HCT116 (cell line): ENCODE measurements at regions of chr6 and their contacts with region 1.

Region 1: DNA sequence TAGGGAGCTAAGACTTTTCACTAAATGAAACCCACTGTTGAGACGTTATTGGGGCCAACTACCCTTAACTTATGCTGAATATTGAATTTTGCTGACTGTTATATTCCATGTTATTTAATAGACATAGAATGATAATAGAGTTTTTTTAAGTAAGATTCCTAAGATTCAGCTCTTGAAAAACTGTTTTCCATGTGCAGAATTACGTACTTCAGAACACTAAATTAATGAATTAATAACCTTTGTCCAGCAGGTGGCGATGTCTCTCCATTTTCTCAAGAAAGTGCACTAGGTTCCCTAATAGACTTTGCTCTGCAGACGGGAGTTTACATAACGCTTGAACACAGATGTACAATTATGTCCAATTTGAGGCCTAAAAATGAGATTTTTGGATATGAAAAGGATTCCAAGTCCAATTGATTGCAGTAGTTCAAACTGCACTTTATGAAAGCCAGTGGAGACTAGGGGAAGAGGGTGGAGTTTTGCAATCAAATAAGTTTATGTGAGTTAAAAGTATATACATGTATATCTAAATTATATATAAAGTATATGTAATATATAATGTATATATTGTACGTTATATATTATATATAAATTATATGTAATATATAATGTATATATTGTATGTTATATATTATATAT is 282.1 kb downstream of the UST start:
- DNase-seq: peak; percentile 88
- ATAC-seq: peak; percentile 29; the same call in 1 of the 2 replicates
- H3K4me3 ChIP-seq: no peak overlapping the region
- H3K27ac ChIP-seq: no peak overlapping the region
- H3K4me1 ChIP-seq: peaks cover 27 to 30% of the 10 kb centered on the region in 2 experiments
- H3K27me3 ChIP-seq: no peaks in the 10 kb centered on the region
- CTCF ChIP-seq: peak; percentile 34 to 77 (median 69); a peak in 5 of 6 replicates
- POLR2A ChIP-seq: no peak
- RAD21 ChIP-seq: peak; percentile 93

Region 2: DNA sequence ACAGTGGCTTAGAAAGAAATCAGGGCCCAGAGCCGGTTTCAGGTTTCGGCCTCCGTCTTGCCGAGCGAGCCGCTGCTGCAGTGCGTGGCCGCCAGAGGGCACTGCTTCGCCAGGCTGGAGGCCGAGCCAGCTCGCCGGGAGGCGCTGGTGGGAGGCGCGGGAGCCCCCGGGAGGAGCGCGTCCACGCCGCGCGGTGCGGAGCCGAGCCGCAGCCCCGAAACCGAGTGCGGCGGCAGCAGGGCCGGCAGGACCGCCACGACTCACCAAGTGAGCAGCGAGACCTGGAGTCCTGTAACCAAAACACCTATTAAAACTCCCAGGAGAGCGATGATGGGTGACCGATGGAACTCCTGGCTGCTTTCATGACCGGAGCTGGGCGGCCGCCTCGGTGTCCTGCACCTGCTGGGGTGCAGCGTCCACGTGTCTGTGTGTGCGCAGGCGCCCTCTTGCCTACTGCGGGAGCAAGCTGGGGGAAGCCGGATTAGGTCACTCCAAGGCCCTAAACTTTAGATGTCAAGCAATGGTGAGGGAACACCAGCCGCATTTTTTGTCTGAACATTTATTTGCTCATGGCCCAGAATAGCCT is 468.9 kb before region 1 on chr6:
- CTCF ChIA-PET with region 1: interaction called, 6 read pairs
- POLR2A ChIA-PET with region 1: no interaction called
- RAD21 ChIA-PET with region 1: no interaction called
- intact Hi-C with region 1: loop called (anchors 2 kb)
- DNase-seq: peak; percentile 26
- ATAC-seq: peak; percentile 97
- H3K4me3 ChIP-seq: peak overlapping the region; percentile 23 to 54
- H3K27ac ChIP-seq: no peak overlapping the region
- H3K4me1 ChIP-seq: peaks cover 0 to 6% of the 10 kb centered on the region in 2 experiments; a peak in 2 of 4 replicates
- H3K27me3 ChIP-seq: no peaks in the 10 kb centered on the region
- CTCF ChIP-seq: peak; percentile 84 to 94 (median 94)
- POLR2A ChIP-seq: no peak
- RAD21 ChIP-seq: peak; percentile 88

Region 3: DNA sequence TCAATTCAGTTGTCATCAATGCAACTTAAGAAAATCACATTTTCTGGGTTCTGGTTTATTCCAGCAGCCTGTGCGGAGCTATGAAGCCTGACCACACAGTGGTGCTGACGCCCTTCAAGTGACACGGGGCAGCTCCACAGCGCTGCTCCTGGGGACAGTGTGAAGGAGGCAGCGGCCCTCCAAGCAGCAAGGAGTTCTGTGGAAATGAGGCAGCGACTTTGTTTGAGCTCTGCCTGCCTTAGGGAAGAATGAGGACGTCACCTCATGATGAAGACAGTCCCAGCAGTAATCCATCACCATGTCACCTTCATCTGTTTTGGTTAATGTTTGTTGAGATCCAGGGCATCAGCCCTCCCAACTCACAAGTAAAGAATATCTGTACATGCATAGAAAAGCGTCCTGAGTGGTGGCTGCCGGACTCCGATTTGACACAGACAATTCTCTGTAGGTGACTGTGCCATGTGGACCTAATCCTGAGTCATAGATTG is 450.6 kb before region 1 on chr6:
- CTCF ChIA-PET with region 1: interaction called, 37 read pairs
- POLR2A ChIA-PET with region 1: no interaction called
- RAD21 ChIA-PET with region 1: interaction called, 3 to 5 read pairs
- intact Hi-C with region 1: loop called (anchors 5 kb)
- DNase-seq: peak; percentile 74
- ATAC-seq: peak; percentile 100
- H3K4me3 ChIP-seq: no peak overlapping the region
- H3K27ac ChIP-seq: no peak overlapping the region
- H3K4me1 ChIP-seq: peaks cover 0 to 7% of the 10 kb centered on the region in 2 experiments; a peak in 1 of 4 replicates
- H3K27me3 ChIP-seq: 0 out of 2 replicates have a peak, but pooled peaks cover 5% of the 10 kb centered on the region
- CTCF ChIP-seq: peak; percentile 92 to 99 (median 98)
- POLR2A ChIP-seq: no peak
- RAD21 ChIP-seq: peak; percentile 98

Region 4: GRCh38 chr6:148972481-148972880 is 56.4 kb before region 1 on chr6:
- CTCF ChIA-PET with region 1: no interaction called
- POLR2A ChIA-PET with region 1: no interaction called
- RAD21 ChIA-PET with region 1: no interaction called
- intact Hi-C with region 1: no loop called
- DNase-seq: peak; percentile 46
- ATAC-seq: peak; percentile 100
- H3K4me3 ChIP-seq: no peak overlapping the region; a peak in 1 of 4 replicates
- H3K27ac ChIP-seq: no peak overlapping the region
- H3K4me1 ChIP-seq: peaks cover 6 to 9% of the 10 kb centered on the region in 2 experiments
- H3K27me3 ChIP-seq: no peaks in the 10 kb centered on the region
- CTCF ChIP-seq: no peak
- POLR2A ChIP-seq: no peak
- RAD21 ChIP-seq: no peak

Region 5: GRCh38 chr6:149082286-149082707 is 53.4 kb after region 1 on chr6:
- CTCF ChIA-PET with region 1: interaction called, 6 read pairs
- POLR2A ChIA-PET with region 1: no interaction called
- RAD21 ChIA-PET with region 1: interaction called in 1 of 2 experiments, 3 read pairs
- intact Hi-C with region 1: loop called (anchors 2 kb)
- DNase-seq: peak; percentile 57
- ATAC-seq: peak; percentile 97
- H3K4me3 ChIP-seq: no peak overlapping the region
- H3K27ac ChIP-seq: no peak overlapping the region
- H3K4me1 ChIP-seq: no peaks in the 10 kb centered on the region; a peak in 1 of 4 replicates
- H3K27me3 ChIP-seq: no peaks in the 10 kb centered on the region
- CTCF ChIP-seq: peak; percentile 68 to 84 (median 79); a peak in 5 of 6 replicates
- POLR2A ChIP-seq: no peak
- RAD21 ChIP-seq: peak; percentile 95

Region 6: GRCh38 chr6:149431905-149432775 is 403.3 kb after region 1 on chr6:
- CTCF ChIA-PET with region 1: interaction called, 22 read pairs
- POLR2A ChIA-PET with region 1: no interaction called
- RAD21 ChIA-PET with region 1: interaction called, 7 to 9 read pairs
- intact Hi-C with region 1: loop called (anchors 1 kb)
- DNase-seq: peak; percentile 76
- ATAC-seq: peak; percentile 99
- H3K4me3 ChIP-seq: no peak overlapping the region
- H3K27ac ChIP-seq: no peak overlapping the region
- H3K4me1 ChIP-seq: peaks cover 0 to 7% of the 10 kb centered on the region in 2 experiments; a peak in 2 of 4 replicates
- H3K27me3 ChIP-seq: no peaks in the 10 kb centered on the region
- CTCF ChIP-seq: peak; percentile 85 to 95 (median 93)
- POLR2A ChIP-seq: no peak
- RAD21 ChIP-seq: peak; percentile 100

Region 7: DNA sequence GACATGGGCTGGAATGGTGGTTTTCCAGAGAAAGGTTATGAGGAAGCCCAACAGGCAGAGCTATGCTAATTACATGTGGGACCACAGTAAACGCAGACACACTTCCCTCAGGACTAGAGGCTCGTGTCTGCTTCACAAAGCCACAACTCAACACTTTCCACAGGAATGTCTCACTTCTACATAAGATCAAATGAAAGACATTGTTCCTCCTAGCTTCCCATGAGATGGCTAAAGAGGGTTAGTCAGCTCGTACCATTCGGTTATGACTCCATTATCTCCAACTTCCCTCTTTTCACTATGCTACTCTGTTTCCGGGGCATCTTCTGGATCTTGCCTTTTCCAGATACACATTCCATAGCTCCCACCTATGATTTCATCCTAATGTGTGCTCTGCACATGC is 485.0 kb after region 1 on chr6:
- CTCF ChIA-PET with region 1: interaction called, 4 read pairs
- POLR2A ChIA-PET with region 1: no interaction called
- RAD21 ChIA-PET with region 1: no interaction called
- intact Hi-C with region 1: loop called (anchors 1 kb)
- DNase-seq: no peak
- ATAC-seq: no peak
- H3K4me3 ChIP-seq: no peak overlapping the region
- H3K27ac ChIP-seq: no peak overlapping the region
- H3K4me1 ChIP-seq: no peaks in the 10 kb centered on the region
- H3K27me3 ChIP-seq: no peaks in the 10 kb centered on the region
- CTCF ChIP-seq: no peak
- POLR2A ChIP-seq: no peak
- RAD21 ChIP-seq: no peak

Region 8: GRCh38 chr6:149925974-149926777 is 897.3 kb after region 1 on chr6:
- CTCF ChIA-PET with region 1: no interaction called
- POLR2A ChIA-PET with region 1: no interaction called
- RAD21 ChIA-PET with region 1: no interaction called
- intact Hi-C with region 1: loop called (anchors 5 kb)
- DNase-seq: peak; percentile 51
- ATAC-seq: peak; percentile 95
- H3K4me3 ChIP-seq: peak overlapping the region; percentile 19 to 30; a peak in 3 of 4 replicates
- H3K27ac ChIP-seq: no peak overlapping the region; the same call in 1 of the 2 replicates
- H3K4me1 ChIP-seq: peaks cover 3 to 22% of the 10 kb centered on the region in 2 experiments; a peak in 3 of 4 replicates
- H3K27me3 ChIP-seq: 0 out of 2 replicates have a peak, but pooled peaks cover 4% of the 10 kb centered on the region
- CTCF ChIP-seq: peak; percentile 85 to 93 (median 92)
- POLR2A ChIP-seq: no peak
- RAD21 ChIP-seq: peak; percentile 99